Naive thymus-derived CD4-positive, alpha-beta T cell (primary cell): ENCODE measurements at regions of chr11 and their contacts with region 1.

Region 1: GRCh38 chr11:18721561-18722292 is 4.3 kb downstream of the IGSF22 start:
- DNase-seq: peak; percentile 15 to 51 (median 37)
- ATAC-seq: peak; percentile 61
- H3K4me3 ChIP-seq: peak overlapping the region; percentile 72
- H3K4me3 Mint-ChIP-seq: peak overlapping the region; percentile 82 to 97 (median 92)
- H3K27ac ChIP-seq: peak overlapping the region; percentile 46
- H3K27ac Mint-ChIP-seq: peak overlapping the region in 6 of 9 donors; percentile 39 to 89 (median 76)
- H3K4me1 ChIP-seq: peaks cover 0 to 5% of the 10 kb centered on the region in 2 donors
- H3K4me1 Mint-ChIP-seq: peaks cover 8 to 15% (median 9%) of the 10 kb centered on the region in 7 donors
- H3K27me3 ChIP-seq: no peaks in the 10 kb centered on the region
- H3K27me3 Mint-ChIP-seq: peaks cover 0 to 34% (median 0%) of the 10 kb centered on the region in 5 donors

Region 2: GRCh38 chr11:18105802-18106574 is 615.7 kb before region 1 on chr11 and contains the start of gene SAAL1:
- CTCF ChIA-PET with region 1: no interaction called
- POLR2A ChIA-PET with region 1: no interaction called
- intact Hi-C with region 1: loop called in 1 of 2 experiments (anchors 2 kb)
- DNase-seq: peak; percentile 80 to 95 (median 84)
- ATAC-seq: peak; percentile 99
- H3K4me3 ChIP-seq: peak within 1 kb of the TSS; percentile 93
- H3K4me3 Mint-ChIP-seq: peak within 1 kb of the TSS; percentile 84 to 95 (median 93)
- H3K27ac ChIP-seq: peak within 1 kb of the TSS; percentile 78
- H3K27ac Mint-ChIP-seq: peak within 1 kb of the TSS; percentile 77 to 93 (median 90)
- H3K4me1 ChIP-seq: peaks cover 14 to 15% of the 10 kb centered on the region in 2 donors
- H3K4me1 Mint-ChIP-seq: peaks cover 21 to 54% (median 42%) of the 10 kb centered on the region in 7 donors
- H3K27me3 ChIP-seq: no peaks in the 10 kb centered on the region
- H3K27me3 Mint-ChIP-seq: peaks cover 0 to 15% (median 0%) of the 10 kb centered on the region in 5 donors
- total RNA-seq, gene SAAL1: 16.0 to 25.3 (median 19.3) TPM

Region 3: GRCh38 chr11:18588297-18589252 is 133.2 kb before region 1 on chr11 and contains the start of gene UEVLD:
- CTCF ChIA-PET with region 1: interaction called, 3 read pairs
- POLR2A ChIA-PET with region 1: no interaction called
- intact Hi-C with region 1: loop called (anchors 2 to 5 kb)
- DNase-seq: peak; percentile 18 to 82 (median 23)
- ATAC-seq: peak; percentile 62
- H3K4me3 ChIP-seq: peak within 1 kb of the TSS; percentile 63
- H3K4me3 Mint-ChIP-seq: no peak within 1 kb of the TSS
- H3K27ac ChIP-seq: peak within 1 kb of the TSS; percentile 68
- H3K27ac Mint-ChIP-seq: no peak within 1 kb of the TSS
- H3K4me1 ChIP-seq: peaks cover 8 to 15% of the 10 kb centered on the region in 2 donors
- H3K4me1 Mint-ChIP-seq: peaks cover 0 to 19% (median 0%) of the 10 kb centered on the region in 7 donors
- H3K27me3 ChIP-seq: no peaks in the 10 kb centered on the region
- H3K27me3 Mint-ChIP-seq: no peaks in the 10 kb centered on the region
- total RNA-seq, gene UEVLD: 3.6 to 19.8 (median 5.8) TPM

Region 4: DNA sequence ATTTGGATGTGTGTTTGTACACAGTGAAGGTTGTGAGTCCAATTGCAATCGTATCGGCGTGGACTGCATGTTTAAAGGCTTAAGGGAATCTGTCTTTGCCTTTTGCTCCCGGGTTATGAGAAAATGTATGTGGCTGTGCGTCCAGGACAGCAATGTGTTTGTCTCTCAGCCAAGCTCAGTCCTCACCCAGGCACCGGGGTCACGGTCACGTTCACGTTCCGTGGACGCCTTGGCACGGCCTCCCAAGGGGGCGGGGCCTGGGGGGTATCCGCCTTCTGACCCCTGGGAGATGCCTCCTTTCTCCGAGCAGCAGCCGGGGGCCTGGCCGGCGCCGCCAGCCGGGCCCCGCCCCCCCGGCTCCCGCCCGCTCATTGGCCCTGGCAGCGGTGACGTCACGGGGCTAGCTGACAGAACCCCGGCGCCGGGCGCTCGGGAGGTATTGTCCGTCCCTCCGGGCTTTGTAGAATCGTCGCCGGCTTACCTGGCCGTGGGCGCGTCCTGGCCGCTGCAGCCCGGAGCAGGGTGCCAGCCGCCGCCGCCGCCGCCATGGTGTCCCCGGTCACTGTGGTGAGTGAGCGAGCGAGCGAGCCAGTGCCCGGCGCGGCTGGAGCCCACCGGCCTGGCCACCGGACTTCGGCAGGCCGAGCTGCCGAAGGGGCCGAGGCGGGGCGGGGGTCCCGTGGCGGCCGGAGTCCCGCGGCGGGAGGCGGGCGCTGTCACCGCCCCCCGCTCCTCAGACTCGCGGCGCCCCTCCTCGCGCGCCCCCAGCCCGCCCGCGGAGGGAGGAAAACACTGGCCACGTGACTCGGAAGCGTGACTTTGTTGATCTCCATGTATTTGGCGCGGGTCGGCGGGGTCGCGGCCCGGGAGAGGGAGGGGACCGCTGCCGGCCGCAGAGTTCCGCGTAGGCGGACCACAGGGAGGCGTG is 23.1 kb before region 1 on chr11 and contains the start of gene TMEM86A:
- CTCF ChIA-PET with region 1: interaction called, 15 read pairs
- POLR2A ChIA-PET with region 1: interaction called, 6 read pairs
- intact Hi-C with region 1: loop called (anchors 1 kb)
- DNase-seq: peak; percentile 81 to 89 (median 87)
- ATAC-seq: peak; percentile 97
- H3K4me3 ChIP-seq: peak within 1 kb of the TSS; percentile 42
- H3K4me3 Mint-ChIP-seq: peak within 1 kb of the TSS; percentile 76 to 89 (median 84)
- H3K27ac ChIP-seq: peak within 1 kb of the TSS; percentile 72
- H3K27ac Mint-ChIP-seq: peak within 1 kb of the TSS; percentile 42 to 95 (median 89)
- H3K4me1 ChIP-seq: peaks cover 6% of the 10 kb centered on the region in 2 donors
- H3K4me1 Mint-ChIP-seq: peaks cover 14 to 27% (median 20%) of the 10 kb centered on the region in 7 donors
- H3K27me3 ChIP-seq: no peaks in the 10 kb centered on the region
- H3K27me3 Mint-ChIP-seq: peaks cover 0 to 39% (median 0%) of the 10 kb centered on the region in 5 donors
- total RNA-seq, gene TMEM86A: 0.53 to 6.5 (median 5.5) TPM

Region 5: DNA sequence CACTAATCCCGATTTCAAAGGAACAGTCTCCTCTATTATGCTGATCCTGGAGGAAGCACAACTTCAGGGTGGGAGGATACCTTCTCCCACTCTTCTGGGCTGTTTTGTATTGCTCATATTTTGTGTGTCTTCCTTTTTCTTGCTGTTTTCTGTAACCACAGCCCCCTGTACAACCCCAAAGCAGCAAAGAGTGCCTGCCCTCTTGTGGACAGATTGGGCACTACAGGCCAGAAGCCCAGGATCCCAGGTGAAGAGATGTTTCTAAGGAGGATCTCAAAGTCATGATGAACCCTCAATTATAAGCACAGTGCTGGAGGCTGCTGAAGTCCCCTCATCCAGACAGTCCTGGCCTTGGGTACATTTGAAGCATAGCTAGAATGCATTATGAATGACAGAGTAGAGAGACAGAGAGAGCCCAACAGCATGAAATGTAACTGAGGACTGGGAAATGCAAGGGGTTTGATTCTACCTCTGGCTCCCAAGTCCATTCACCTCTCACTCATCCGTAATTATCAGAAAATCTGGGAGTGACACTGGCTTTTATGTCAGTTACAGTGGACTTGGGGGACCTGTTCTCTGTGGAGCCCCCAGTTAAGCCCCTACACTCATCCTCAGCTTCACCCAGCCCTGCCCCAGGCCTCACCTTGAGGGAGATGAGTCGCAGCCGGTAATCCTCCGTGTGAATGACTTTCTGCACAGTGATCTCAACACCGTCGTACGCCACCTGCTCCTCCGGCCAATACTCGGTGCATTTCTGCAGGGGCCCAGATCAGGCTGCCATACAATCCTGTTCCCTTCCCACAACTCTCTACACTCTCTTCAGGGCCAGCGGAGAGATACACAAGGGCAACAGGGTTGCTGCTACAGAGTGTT is 10.5 kb after region 1 on chr11:
- CTCF ChIA-PET with region 1: interaction called, 21 read pairs
- POLR2A ChIA-PET with region 1: interaction called, 5 read pairs
- intact Hi-C with region 1: no loop called
- DNase-seq: peak; percentile 44 to 81 (median 65)
- ATAC-seq: peak; percentile 79
- H3K4me3 ChIP-seq: no peak overlapping the region
- H3K4me3 Mint-ChIP-seq: no peak overlapping the region
- H3K27ac ChIP-seq: no peak overlapping the region
- H3K27ac Mint-ChIP-seq: peak overlapping the region in 1 of 9 donors; percentile 32
- H3K4me1 ChIP-seq: peaks cover 5 to 6% of the 10 kb centered on the region in 2 donors
- H3K4me1 Mint-ChIP-seq: peaks cover 4 to 15% (median 13%) of the 10 kb centered on the region in 7 donors
- H3K27me3 ChIP-seq: no peaks in the 10 kb centered on the region
- H3K27me3 Mint-ChIP-seq: peaks cover 0 to 9% (median 0%) of the 10 kb centered on the region in 5 donors